ENCODE measurements at regions of chr1 and their contacts with region 1.

Region 1: DNA sequence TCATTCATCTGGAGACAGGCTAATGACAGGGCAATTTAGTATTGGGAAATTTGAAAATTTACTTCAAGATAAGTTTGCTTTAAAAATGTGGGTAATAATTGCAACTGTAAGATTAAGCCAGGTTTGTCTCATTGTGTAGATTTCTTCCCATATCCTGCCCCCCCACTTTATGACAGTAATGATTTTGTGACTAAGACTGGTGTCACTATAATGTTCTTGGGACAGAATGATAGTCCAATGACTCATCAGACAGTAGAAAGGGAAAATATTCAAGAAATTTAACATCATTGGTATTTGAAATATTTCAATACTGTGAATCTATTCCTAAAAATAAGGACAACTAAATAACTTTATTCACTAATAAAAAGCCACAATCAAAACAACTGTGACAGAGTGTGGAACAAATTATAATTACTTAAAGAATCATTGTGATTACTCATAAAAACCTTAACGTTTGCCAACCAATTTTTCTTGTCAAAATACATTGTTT is 36.7 kb downstream of the FH start:
- DNase-seq: no peak
- H3K4me3 Mint-ChIP-seq: no peak overlapping the region
- H3K27ac Mint-ChIP-seq: no peak overlapping the region
- H3K4me1 Mint-ChIP-seq: no peaks in the 10 kb centered on the region
- H3K27me3 Mint-ChIP-seq: no peaks in the 10 kb centered on the region

Region 2: DNA sequence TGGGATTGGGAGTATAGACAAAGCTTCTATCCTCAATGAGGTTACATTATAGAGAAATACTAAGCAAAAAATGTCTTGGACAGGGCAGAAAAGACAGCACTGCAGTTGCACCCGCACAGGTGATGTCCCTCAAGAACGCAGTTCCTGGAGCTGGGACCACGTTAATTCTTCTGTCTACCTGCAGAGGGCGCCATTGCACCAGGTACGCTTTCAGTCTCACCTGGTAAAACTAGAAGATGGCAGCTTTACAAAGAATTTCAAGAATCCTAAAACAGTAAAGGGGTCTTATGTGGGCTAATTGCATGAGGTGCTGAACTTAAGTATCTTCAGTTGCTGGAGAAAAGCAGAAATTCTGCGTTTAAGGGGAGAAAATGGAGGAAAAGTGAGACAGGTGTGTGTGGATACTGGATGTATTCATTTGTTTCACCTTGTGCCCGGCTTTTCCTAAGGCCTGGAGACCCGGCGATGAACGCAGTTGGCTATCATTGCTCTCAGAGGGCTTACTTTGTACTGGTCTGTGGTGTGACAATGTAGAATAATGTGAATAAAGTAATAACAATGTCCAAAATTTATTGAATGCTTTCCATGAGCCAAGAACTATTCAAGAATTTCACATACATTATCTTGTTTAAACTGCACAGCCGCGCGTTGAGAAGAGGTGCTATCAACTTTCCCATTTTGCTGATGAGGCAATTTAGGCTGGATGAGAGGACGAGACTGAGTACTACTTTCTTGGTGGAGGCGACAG is 594.6 kb before region 1 on chr1:
- intact Hi-C with region 1: loop called (anchors 5 kb)
- DNase-seq: no peak
- H3K4me3 Mint-ChIP-seq: no peak overlapping the region
- H3K27ac Mint-ChIP-seq: no peak overlapping the region
- H3K4me1 Mint-ChIP-seq: no peaks in the 10 kb centered on the region
- H3K27me3 Mint-ChIP-seq: no peaks in the 10 kb centered on the region